Aorta (tissue), 5 donors: ENCODE measurements at regions of chrX and their contacts with region 1.

Region 1: DNA sequence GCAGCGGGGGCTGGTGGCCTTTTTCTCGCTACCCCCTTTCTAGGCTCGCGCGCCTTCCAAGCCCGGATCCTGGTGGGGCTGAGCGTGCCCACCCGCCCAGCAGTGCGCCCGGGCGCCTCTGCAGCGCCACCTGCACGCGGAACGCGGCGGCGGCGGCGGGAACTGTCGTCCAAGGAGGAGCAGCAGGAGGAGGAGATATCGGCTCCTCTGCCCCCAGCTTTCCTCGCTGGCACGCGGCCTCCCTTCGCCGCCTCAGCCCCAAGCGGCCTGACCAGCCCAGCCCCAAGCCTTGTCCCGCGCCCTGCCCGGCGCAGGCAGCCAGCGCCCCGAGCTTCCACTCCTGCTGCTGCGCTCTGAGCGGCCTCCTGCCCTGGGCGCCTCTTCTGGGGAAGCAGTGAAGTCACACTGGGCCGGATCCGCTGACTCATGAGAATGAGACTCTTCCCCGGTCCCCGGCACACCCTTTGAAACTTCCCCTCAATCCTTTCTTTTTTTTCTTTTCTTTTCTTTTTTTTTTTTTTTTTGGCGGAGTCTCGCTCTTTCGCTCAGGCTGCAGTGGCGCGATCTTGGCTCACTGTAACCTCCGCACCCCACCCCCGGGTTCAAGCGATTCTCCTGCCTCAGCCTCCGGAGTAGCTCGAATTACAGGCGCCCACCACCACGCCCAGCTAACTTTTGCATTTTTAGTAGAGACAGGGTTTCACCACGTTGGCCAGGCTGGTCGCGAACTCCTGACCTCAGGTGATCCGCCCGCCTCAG is 10.6 kb upstream of the ELF4 start:
- DNase-seq: peak; percentile 89
- ATAC-seq: peak; percentile 79
- H3K4me3 ChIP-seq: peak overlapping the region in 1 of 2 donors; percentile 36
- H3K27ac ChIP-seq: no peak overlapping the region
- H3K4me1 ChIP-seq: no peaks in the 10 kb centered on the region
- H3K27me3 ChIP-seq: no peaks in the 10 kb centered on the region

Region 2: GRCh38 chrX:130079824-130080406 is 41.0 kb before region 1 on chrX:
- intact Hi-C with region 1: loop called in 1 of 2 experiments (anchors 10 kb)
- DNase-seq: no peak
- ATAC-seq: peak; percentile 70
- H3K4me3 ChIP-seq: no peak overlapping the region
- H3K27ac ChIP-seq: no peak overlapping the region
- H3K4me1 ChIP-seq: no peaks in the 10 kb centered on the region
- H3K27me3 ChIP-seq: no peaks in the 10 kb centered on the region

Region 3: DNA sequence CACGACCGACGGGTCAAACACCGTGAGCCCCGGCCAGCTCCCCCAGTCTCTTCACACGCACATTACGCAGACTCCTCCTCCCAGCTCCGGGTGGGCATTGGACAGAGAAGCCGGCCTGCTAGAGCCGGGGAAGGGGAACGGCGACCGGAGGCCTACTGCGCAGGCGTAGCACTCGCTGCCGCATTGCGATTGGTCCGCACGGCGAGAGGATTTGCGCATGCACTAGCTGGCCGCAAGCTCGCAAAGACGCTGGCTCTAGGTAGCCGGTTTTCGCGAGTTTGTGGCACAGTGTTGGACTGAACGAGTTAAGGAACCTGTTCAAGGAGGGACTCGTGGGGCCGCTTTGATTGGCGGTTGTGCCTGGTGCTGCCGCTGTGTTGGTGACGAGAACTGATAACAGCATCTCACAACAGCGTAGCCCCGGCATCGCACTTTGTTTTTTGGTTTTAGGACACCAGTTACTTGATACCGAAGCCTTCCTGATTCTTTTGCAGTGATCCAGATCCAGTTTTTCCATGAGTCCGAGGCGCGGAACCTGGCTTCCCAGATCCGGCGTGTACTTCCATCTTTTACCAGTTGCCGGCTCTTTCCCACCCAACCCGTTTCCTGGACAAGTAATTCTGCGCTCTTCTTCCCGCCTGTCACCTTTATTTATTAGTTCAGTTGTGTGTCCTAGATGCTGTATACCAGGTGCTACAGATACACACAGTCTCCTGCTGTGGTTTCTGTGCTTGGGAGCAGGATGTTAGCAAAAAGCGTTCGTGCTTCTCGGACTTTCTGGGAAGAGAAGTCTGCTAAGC is 45.0 kb after region 1 on chrX and contains the start of gene AIFM1:
- intact Hi-C with region 1: loop called in 1 of 2 experiments (anchors 5 kb)
- DNase-seq: peak; percentile 95 to 96
- ATAC-seq: peak; percentile 97
- H3K4me3 ChIP-seq: peak within 1 kb of the TSS; percentile 45 to 82
- H3K27ac ChIP-seq: peak within 1 kb of the TSS in 1 of 2 donors; percentile 86
- H3K4me1 ChIP-seq: no peaks in the 10 kb centered on the region
- H3K27me3 ChIP-seq: no peaks in the 10 kb centered on the region
- total RNA-seq, gene AIFM1: 12.7 to 16.8 TPM

Region 4: GRCh38 chrX:130216320-130216719 is 95.4 kb after region 1 on chrX:
- intact Hi-C with region 1: no loop called
- DNase-seq: no peak
- ATAC-seq: no peak
- H3K4me3 ChIP-seq: no peak overlapping the region
- H3K27ac ChIP-seq: no peak overlapping the region
- H3K4me1 ChIP-seq: no peaks in the 10 kb centered on the region
- H3K27me3 ChIP-seq: no peaks in the 10 kb centered on the region